Activated CD4-positive, alpha-beta T cell treated with anti-CD3 and anti-CD28 coated beads for 36 hours (primary cell): ENCODE measurements at regions of chr15 and their contacts with region 1.

Region 1: DNA sequence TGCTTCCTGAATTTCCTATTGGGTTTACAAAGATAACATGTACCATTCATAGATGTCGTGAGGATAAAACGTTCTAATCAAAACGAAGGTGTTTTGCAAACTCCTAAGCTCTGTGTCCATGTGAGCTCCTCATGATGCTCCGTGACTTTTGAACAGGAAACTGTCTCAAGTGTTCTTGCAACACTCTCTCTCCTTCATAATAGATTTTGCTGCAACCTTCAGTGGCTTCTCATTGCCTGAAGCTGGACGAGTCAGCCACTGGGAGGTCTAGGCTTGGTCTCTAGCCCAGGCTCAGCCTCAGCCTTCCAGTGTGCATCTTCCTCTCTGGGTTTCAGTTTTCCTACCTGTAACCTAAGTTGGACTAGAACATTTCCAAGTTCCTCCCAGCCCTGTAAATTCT is 18.7 kb upstream of the BCL2A1 start:
- DNase-seq: no peak
- ATAC-seq: no peak
- H3K4me3 Mint-ChIP-seq: no peak overlapping the region
- H3K27ac Mint-ChIP-seq: no peak overlapping the region
- H3K4me1 Mint-ChIP-seq: peaks cover 4% of the 10 kb centered on the region
- H3K27me3 Mint-ChIP-seq: no peaks in the 10 kb centered on the region

Region 2: DNA sequence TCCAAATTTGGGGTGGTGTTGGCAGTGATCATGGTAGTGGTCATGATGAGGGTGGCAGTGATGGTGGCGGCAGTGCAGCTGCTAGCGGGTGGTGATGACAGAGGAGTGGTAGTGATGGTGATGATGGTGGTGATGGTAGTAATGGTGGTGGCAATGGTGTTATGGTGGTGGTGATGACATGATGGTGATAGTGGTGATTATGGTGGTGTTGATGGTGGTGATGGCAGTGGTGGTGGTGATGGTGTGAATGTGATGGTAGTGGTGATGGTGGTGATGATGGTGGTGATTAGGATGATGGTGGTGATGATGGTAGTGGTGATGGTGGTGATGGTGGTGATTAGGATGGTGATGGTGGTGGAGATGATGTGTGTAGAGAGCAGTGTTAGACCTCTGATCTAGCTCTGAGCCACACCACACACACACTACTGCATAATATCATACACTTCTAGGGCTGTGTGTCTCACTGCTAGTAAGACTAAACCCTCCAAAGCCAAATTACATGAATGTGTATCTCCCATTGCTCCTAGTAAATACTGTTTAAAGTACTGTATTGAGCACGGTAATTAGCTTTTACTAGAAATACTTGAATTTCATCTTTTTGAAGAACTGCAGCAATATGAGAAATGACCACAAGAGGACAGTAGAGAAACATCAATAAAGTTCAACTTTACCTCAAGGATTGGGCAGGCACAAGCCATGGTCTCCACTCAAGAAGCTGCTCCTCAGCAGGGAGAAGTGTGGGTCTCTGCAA is 649.9 kb before region 1 on chr15:
- CTCF ChIA-PET with region 1: no interaction called
- POLR2A ChIA-PET with region 1: no interaction called
- intact Hi-C with region 1: loop called in 1 of 2 experiments (anchors 5 kb)
- DNase-seq: peak; percentile 14
- ATAC-seq: no peak
- H3K4me3 Mint-ChIP-seq: no peak overlapping the region
- H3K27ac Mint-ChIP-seq: no peak overlapping the region
- H3K4me1 Mint-ChIP-seq: no peaks in the 10 kb centered on the region
- H3K27me3 Mint-ChIP-seq: no peaks in the 10 kb centered on the region

Region 3: GRCh38 chr15:79380755-79381497 is 608.8 kb before region 1 on chr15:
- CTCF ChIA-PET with region 1: interaction called, 3 read pairs
- POLR2A ChIA-PET with region 1: no interaction called
- intact Hi-C with region 1: loop called (anchors 1 kb)
- DNase-seq: peak; percentile 89
- ATAC-seq: peak; percentile 95
- H3K4me3 Mint-ChIP-seq: no peak overlapping the region
- H3K27ac Mint-ChIP-seq: no peak overlapping the region
- H3K4me1 Mint-ChIP-seq: peaks cover 3% of the 10 kb centered on the region
- H3K27me3 Mint-ChIP-seq: no peaks in the 10 kb centered on the region

Region 4: GRCh38 chr15:79602731-79603130 is 387.0 kb before region 1 on chr15:
- CTCF ChIA-PET with region 1: no interaction called
- POLR2A ChIA-PET with region 1: no interaction called
- intact Hi-C with region 1: no loop called
- DNase-seq: no peak
- ATAC-seq: no peak
- H3K4me3 Mint-ChIP-seq: no peak overlapping the region
- H3K27ac Mint-ChIP-seq: no peak overlapping the region
- H3K4me1 Mint-ChIP-seq: no peaks in the 10 kb centered on the region
- H3K27me3 Mint-ChIP-seq: peaks cover 30% of the 10 kb centered on the region

Region 5: GRCh38 chr15:79756365-79756764 is 233.3 kb before region 1 on chr15:
- CTCF ChIA-PET with region 1: no interaction called
- POLR2A ChIA-PET with region 1: no interaction called
- intact Hi-C with region 1: no loop called
- DNase-seq: no peak
- ATAC-seq: no peak
- H3K4me3 Mint-ChIP-seq: no peak overlapping the region
- H3K27ac Mint-ChIP-seq: no peak overlapping the region
- H3K4me1 Mint-ChIP-seq: no peaks in the 10 kb centered on the region
- H3K27me3 Mint-ChIP-seq: peaks cover 8% of the 10 kb centered on the region

Region 6: DNA sequence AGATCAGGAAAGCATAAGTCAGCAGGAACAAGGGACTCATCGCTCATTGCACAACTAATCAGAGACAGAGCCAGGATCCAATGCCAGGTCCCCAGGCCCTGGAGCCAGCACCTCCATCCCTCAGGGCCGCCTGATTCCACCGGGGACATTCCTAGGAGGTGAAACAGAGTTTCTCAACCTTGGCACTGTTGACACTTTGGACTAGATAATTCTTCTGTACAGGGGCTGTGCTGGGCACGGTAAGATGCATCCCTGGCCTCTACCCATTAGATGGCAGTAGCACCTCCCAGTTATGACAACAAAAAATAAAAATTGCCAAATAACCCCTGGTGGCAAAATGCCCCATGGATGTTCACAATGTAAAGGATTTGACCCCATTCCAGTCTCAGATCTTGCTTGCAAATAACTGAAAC is 220.6 kb before region 1 on chr15:
- CTCF ChIA-PET with region 1: interaction called, 3 read pairs
- POLR2A ChIA-PET with region 1: no interaction called
- intact Hi-C with region 1: loop called (anchors 1 to 2 kb)
- DNase-seq: peak; percentile 25
- ATAC-seq: no peak
- H3K4me3 Mint-ChIP-seq: no peak overlapping the region
- H3K27ac Mint-ChIP-seq: no peak overlapping the region
- H3K4me1 Mint-ChIP-seq: no peaks in the 10 kb centered on the region
- H3K27me3 Mint-ChIP-seq: no peaks in the 10 kb centered on the region

Region 7: GRCh38 chr15:79896637-79897379 is 92.9 kb before region 1 on chr15 and contains the start of gene MTHFS:
- CTCF ChIA-PET with region 1: interaction called, 5 read pairs
- POLR2A ChIA-PET with region 1: no interaction called
- intact Hi-C with region 1: loop called (anchors 1 kb)
- DNase-seq: peak; percentile 87
- ATAC-seq: peak; percentile 81
- H3K4me3 Mint-ChIP-seq: peak within 1 kb of the TSS; percentile 97
- H3K27ac Mint-ChIP-seq: peak within 1 kb of the TSS; percentile 100
- H3K4me1 Mint-ChIP-seq: peaks cover 46% of the 10 kb centered on the region
- H3K27me3 Mint-ChIP-seq: no peaks in the 10 kb centered on the region
- total RNA-seq, gene MTHFS: 36.1 to 48.5 TPM

Region 8: DNA sequence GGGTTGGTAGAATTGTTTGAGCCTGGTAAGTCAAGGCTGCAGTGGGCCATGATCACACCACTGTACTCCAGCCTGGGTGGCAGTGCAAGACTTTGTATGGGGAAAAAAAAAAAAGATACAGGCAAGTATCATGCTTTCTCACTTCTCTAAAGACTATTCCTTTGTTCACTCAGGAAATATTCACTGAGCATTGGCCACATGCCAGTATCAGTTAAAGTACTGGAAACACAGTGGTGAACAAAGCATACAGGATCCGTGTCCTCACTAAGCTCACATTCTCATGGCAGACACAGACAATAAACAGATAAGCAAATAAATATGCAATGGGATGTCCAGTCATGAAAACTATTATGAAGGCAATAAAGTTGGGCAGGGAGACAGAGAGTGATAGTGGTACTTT is 87.7 kb before region 1 on chr15:
- CTCF ChIA-PET with region 1: interaction called, 4 read pairs
- POLR2A ChIA-PET with region 1: no interaction called
- intact Hi-C with region 1: loop called in 1 of 2 experiments (anchors 1 kb)
- DNase-seq: no peak
- ATAC-seq: no peak
- H3K4me3 Mint-ChIP-seq: no peak overlapping the region
- H3K27ac Mint-ChIP-seq: no peak overlapping the region
- H3K4me1 Mint-ChIP-seq: peaks cover 48% of the 10 kb centered on the region
- H3K27me3 Mint-ChIP-seq: no peaks in the 10 kb centered on the region

Region 9: DNA sequence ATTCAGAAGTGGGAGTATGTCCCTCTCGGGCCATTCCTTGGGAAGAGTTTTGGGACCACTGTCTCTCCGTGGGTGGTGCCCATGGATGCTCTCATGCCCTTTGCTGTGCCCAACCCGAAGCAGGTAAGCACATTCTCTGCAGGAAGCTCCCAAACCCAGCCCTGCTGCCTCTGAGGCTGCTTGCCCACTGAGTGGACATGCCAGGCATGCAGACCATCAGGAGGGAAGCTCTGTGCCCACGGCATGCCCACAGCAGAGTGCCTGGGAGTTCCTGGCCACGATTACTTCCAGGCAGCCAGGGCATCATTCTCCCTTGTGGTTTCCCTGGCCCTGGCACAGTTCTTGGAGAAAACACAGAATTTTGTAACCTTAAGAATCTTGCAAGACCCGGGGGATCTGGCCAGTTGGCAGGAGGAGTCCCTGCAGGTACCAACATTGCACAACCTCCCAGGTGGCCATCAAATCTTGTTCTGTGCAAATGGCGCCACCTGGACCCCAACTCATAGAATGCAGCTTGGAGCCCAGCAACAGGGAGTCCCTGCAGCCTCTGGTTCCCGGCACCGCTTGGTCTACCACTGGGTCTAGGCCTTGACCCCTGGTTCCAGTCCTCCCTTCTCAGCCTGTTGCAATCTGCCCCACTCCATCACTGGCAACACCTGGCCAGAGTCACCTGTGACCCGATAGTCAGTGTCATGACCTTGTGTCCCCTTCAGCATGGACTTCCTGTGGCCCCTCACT is 183.5 kb after region 1 on chr15:
- CTCF ChIA-PET with region 1: interaction called, 3 read pairs
- POLR2A ChIA-PET with region 1: no interaction called
- intact Hi-C with region 1: loop called in 1 of 2 experiments (anchors 1 kb)
- DNase-seq: peak; percentile 85
- ATAC-seq: peak; percentile 88
- H3K4me3 Mint-ChIP-seq: no peak overlapping the region
- H3K27ac Mint-ChIP-seq: no peak overlapping the region
- H3K4me1 Mint-ChIP-seq: no peaks in the 10 kb centered on the region
- H3K27me3 Mint-ChIP-seq: no peaks in the 10 kb centered on the region